Breast epithelium (tissue), 4 donors: ENCODE measurements at regions of chr1 and their contacts with region 1.

Region 1: DNA sequence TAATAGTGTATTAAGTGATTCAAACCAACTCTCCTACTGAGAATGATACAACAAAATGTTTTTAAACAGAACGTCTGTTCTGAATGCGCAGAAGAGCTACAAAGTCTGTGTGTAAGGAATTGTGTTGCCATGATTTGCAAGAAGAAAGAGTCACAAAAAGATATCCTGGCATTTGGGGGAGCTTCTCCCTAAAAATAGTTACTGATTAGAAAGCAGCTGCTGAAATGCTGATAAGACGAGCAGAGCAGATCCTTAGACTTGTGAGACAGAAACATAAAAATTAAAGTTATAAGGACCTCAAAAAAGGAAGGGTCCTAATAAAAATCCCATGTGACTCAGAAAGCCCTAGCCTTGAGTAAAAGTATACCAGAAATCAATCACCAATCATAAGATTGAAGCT is 54.9 kb upstream of the CRB1 start:
- DNase-seq: no peak
- H3K4me3 ChIP-seq: no peak overlapping the region
- H3K27ac ChIP-seq: no peak overlapping the region
- H3K4me1 ChIP-seq: no peaks in the 10 kb centered on the region
- H3K27me3 ChIP-seq: no peaks in the 10 kb centered on the region
- CTCF ChIP-seq: no peak
- POLR2A ChIP-seq: no peak

Region 2: GRCh38 chr1:197224160-197224559 is 11.0 kb after region 1 on chr1:
- intact Hi-C with region 1: loop called (anchors 1 kb)
- DNase-seq: no peak
- H3K4me3 ChIP-seq: no peak overlapping the region
- H3K27ac ChIP-seq: no peak overlapping the region
- H3K4me1 ChIP-seq: no peaks in the 10 kb centered on the region
- H3K27me3 ChIP-seq: no peaks in the 10 kb centered on the region
- CTCF ChIP-seq: no peak
- POLR2A ChIP-seq: no peak